Activated CD4-positive, alpha-beta memory T cell treated with anti-CD3 and anti-CD28 coated beads for 36 hours (primary cell): ENCODE measurements at regions of chr10 and their contacts with region 1.

Region 1: GRCh38 chr10:26448706-26449435 is 10.7 kb downstream of the APBB1IP start:
- DNase-seq: peak; percentile 86
- H3K4me3 Mint-ChIP-seq: peak overlapping the region; percentile 50
- H3K27ac Mint-ChIP-seq: peak overlapping the region; percentile 89
- H3K4me1 Mint-ChIP-seq: peaks cover 90% of the 10 kb centered on the region
- H3K27me3 Mint-ChIP-seq: no peaks in the 10 kb centered on the region

Region 2: GRCh38 chr10:26031300-26031699 is 417.6 kb before region 1 on chr10:
- CTCF ChIA-PET with region 1: no interaction called
- POLR2A ChIA-PET with region 1: no interaction called
- intact Hi-C with region 1: no loop called
- DNase-seq: no peak
- H3K4me3 Mint-ChIP-seq: no peak overlapping the region
- H3K27ac Mint-ChIP-seq: no peak overlapping the region
- H3K4me1 Mint-ChIP-seq: no peaks in the 10 kb centered on the region
- H3K27me3 Mint-ChIP-seq: no peaks in the 10 kb centered on the region

Region 3: DNA sequence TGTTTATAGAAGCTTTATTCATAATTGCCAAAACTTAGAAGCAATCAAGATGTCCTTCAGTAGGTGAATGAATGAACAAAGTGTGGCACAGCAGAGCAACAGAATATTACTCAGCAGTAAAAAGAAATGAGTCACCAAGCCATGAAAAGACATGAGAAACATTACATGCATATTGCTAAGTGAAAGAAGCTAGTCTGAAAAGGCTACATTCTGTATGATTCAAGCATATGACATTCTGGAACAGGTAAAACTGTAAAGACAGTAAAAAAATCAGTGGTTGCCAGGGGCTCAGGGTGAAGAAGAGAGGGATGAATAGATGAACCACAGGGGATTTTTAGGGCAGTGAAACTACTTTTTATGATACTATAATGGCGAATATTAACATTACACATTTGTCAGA is 91.7 kb before region 1 on chr10:
- CTCF ChIA-PET with region 1: no interaction called
- POLR2A ChIA-PET with region 1: no interaction called
- intact Hi-C with region 1: loop called (anchors 1 kb)
- DNase-seq: peak; percentile 20
- H3K4me3 Mint-ChIP-seq: no peak overlapping the region
- H3K27ac Mint-ChIP-seq: no peak overlapping the region
- H3K4me1 Mint-ChIP-seq: peaks cover 11% of the 10 kb centered on the region
- H3K27me3 Mint-ChIP-seq: peaks cover 17% of the 10 kb centered on the region

Region 4: GRCh38 chr10:26437637-26438461 is 11.0 kb before region 1 on chr10 and contains the start of gene APBB1IP:
- CTCF ChIA-PET with region 1: no interaction called
- POLR2A ChIA-PET with region 1: interaction called, 7 read pairs
- intact Hi-C with region 1: loop called (anchors 1 kb)
- DNase-seq: peak; percentile 66
- H3K4me3 Mint-ChIP-seq: peak within 1 kb of the TSS; percentile 93
- H3K27ac Mint-ChIP-seq: peak within 1 kb of the TSS; percentile 92
- H3K4me1 Mint-ChIP-seq: peaks cover 51% of the 10 kb centered on the region
- H3K27me3 Mint-ChIP-seq: no peaks in the 10 kb centered on the region
- total RNA-seq, gene APBB1IP: 50.1 to 52.1 TPM

Region 5: GRCh38 chr10:26474026-26474425 is 25.2 kb after region 1 on chr10:
- CTCF ChIA-PET with region 1: interaction called, 3 read pairs
- POLR2A ChIA-PET with region 1: interaction called, 10 read pairs
- intact Hi-C with region 1: loop called (anchors 1 kb)
- DNase-seq: no peak
- H3K4me3 Mint-ChIP-seq: no peak overlapping the region
- H3K27ac Mint-ChIP-seq: peak overlapping the region; percentile 92
- H3K4me1 Mint-ChIP-seq: peaks cover 80% of the 10 kb centered on the region
- H3K27me3 Mint-ChIP-seq: no peaks in the 10 kb centered on the region

Region 6: DNA sequence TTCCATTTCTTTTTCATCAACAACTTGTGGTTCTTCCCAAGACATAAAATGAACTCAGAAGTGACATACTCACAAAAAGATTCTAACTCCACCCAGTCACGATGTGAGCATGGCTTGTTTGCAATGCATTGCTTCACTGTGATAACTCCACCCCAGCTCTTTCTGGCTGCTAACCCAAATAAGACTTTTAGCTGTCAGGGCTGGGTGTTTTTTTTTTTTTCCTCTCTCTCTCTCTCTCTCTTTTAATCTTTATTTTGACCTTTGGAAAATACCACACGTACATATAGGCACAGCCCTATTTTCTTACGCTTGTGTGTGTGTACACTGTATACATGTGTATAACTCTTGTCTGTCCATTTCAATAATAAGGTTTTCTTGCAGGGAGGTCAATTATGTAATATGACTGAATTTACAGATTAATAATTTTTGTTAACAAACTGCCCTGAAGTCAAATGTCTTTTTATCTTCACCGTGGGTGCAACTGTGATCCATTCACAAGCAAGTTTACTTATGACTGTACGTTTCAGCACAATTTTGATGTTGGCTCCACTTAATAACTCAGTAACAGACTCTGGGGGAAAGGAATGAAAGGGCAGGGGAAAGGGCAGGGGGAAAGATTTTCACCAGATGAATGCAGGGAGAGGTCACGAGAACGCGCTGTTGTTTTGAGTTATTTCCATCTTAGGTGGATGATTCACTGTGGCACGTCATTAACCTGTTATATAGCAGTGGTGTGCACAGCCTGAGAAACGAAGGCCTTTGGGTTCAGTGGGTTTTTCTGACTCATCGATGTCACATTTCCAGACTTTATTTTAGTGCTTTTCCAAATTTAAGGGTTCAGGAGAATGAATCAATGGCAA is 38.4 kb after region 1 on chr10:
- CTCF ChIA-PET with region 1: no interaction called
- POLR2A ChIA-PET with region 1: no interaction called
- intact Hi-C with region 1: loop called (anchors 1 kb)
- DNase-seq: peak; percentile 86
- H3K4me3 Mint-ChIP-seq: peak overlapping the region; percentile 44
- H3K27ac Mint-ChIP-seq: peak overlapping the region; percentile 86
- H3K4me1 Mint-ChIP-seq: peaks cover 66% of the 10 kb centered on the region
- H3K27me3 Mint-ChIP-seq: no peaks in the 10 kb centered on the region

Region 7: DNA sequence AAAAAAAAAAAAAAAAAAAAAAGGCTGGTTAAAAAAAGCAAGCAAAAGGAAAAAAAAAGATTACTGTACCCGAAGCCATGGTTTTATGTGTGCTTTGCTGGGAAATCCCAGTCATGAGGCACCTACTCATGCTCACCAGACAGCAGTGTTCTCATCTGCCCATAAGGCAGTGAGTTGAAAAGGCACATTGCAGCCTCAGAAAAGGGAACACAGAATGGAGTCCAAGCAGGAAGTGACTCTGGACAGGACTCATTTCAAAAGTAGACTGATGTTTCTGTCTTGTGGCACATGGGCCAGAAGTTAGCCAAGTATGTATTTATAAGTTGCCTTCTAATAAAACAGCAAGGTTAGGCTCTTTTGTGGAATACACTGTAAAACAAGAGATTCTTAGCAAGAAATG is 288.9 kb after region 1 on chr10:
- CTCF ChIA-PET with region 1: no interaction called
- POLR2A ChIA-PET with region 1: no interaction called
- intact Hi-C with region 1: loop called (anchors 5 kb)
- DNase-seq: peak; percentile 75
- H3K4me3 Mint-ChIP-seq: no peak overlapping the region
- H3K27ac Mint-ChIP-seq: peak overlapping the region; percentile 97
- H3K4me1 Mint-ChIP-seq: peaks cover 58% of the 10 kb centered on the region
- H3K27me3 Mint-ChIP-seq: no peaks in the 10 kb centered on the region

Region 8: DNA sequence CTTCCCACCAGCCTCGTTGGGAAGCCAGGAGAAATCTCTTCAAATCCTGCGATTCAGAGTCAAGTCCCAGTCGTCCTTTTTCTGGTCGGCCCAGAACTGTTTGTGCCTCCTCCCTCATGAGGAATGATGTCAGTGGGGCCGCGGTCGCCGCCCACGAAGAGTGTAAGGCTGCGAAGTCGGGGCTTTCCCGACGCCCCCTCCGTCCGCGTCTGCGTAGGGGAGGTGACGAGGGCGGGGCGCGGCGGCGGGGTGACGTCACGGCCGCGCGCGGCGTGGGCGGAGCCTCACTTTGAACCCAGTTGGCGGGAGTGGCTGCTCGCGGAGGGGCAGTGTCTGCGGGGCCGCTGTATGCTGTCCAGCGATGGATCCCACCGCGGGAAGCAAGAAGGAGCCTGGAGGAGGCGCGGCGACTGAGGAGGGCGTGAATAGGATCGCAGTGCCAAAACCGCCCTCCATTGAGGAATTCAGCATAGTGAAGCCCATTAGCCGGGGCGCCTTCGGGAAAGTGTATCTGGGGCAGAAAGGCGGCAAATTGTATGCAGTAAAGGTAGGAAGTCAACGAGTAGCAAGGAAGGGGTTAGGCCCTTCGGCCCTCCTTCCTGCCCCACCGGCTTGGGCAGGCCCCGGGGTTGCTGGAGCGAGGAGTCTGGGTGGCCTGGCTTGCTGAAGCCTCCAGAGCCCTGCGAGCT is 706.3 kb after region 1 on chr10 and contains the start of gene MASTL:
- CTCF ChIA-PET with region 1: no interaction called
- POLR2A ChIA-PET with region 1: no interaction called
- intact Hi-C with region 1: loop called (anchors 5 kb)
- DNase-seq: peak; percentile 96
- H3K4me3 Mint-ChIP-seq: peak within 1 kb of the TSS; percentile 97
- H3K27ac Mint-ChIP-seq: peak within 1 kb of the TSS; percentile 100
- H3K4me1 Mint-ChIP-seq: peaks cover 39% of the 10 kb centered on the region
- H3K27me3 Mint-ChIP-seq: no peaks in the 10 kb centered on the region
- total RNA-seq, gene MASTL: 44.2 to 50.4 TPM